Vagina (tissue), 2 donors: ENCODE measurements at regions of chr4 and their contacts with region 1.

Region 1: DNA sequence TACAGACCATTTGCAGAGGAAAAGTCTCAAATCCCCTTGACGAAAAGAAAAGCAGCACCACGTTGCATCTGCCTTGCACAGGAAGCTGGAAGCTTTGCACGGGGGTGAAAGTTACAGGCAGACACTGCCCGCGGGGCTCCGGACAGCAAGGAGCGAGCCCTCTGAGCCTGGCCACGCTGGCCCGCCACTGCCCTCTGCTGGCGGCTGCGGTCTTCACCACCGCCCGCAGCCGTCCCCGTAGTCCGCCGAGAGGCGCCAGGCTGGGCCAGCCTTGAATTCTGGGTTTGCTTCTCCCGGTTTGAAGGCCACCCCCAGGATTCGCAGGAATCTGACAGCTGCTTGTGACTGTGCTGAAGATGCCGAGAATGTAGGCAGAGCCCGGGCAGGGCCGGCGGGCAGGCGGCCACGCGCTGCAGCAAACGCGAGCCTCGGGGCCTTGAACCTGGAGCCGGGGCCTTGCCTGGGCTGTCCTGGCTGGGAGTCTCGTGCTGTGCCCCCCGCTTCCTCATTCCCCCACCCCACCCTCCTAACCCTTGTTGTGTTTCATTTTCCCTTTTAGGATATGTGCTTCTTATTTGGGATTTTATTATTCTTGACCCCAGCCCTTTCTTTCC is 49.2 kb downstream of the ENPP6 start:
- DNase-seq: peak in 1 of 2 donors; percentile 80
- H3K4me3 ChIP-seq: no peak overlapping the region
- H3K27ac ChIP-seq: no peak overlapping the region
- H3K4me1 ChIP-seq: peaks cover 5% of the 10 kb centered on the region
- H3K27me3 ChIP-seq: no peaks in the 10 kb centered on the region
- CTCF ChIP-seq: peak; percentile 81 to 97 (median 86)
- POLR2A ChIP-seq: no peak

Region 2: DNA sequence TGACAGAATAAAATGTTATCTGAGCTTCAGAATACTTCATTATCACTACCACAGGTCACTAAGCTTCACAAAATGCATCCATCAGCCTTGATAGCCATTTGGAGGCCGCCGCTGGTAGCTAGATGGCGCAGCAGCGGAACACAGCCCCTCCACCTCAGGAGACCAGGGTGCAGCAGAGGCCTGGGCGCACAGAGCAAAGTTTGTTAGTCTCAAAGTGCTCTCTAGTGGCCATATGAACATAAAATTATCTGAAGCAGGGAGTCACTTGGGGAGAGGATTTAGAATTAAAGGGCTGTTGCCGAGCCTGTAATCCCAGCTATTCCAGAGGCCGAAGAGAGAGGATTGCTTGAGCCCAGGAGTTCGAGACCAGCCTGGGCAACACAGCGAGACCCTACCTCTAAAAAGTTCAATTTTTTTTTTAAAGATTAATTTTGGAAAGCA is 1243.2 kb before region 1 on chr4:
- intact Hi-C with region 1: no loop called
- DNase-seq: no peak
- H3K4me3 ChIP-seq: no peak overlapping the region
- H3K27ac ChIP-seq: no peak overlapping the region
- H3K4me1 ChIP-seq: no peaks in the 10 kb centered on the region
- H3K27me3 ChIP-seq: no peaks in the 10 kb centered on the region
- CTCF ChIP-seq: peak in 2 of 3 experiments; percentile 49 to 62
- POLR2A ChIP-seq: no peak

Region 3: GRCh38 chr4:183840311-183840710 is 328.2 kb before region 1 on chr4:
- intact Hi-C with region 1: loop called (anchors 5 kb)
- DNase-seq: no peak
- H3K4me3 ChIP-seq: no peak overlapping the region
- H3K27ac ChIP-seq: no peak overlapping the region
- H3K4me1 ChIP-seq: no peaks in the 10 kb centered on the region
- H3K27me3 ChIP-seq: no peaks in the 10 kb centered on the region
- CTCF ChIP-seq: peak; percentile 77 to 85 (median 79)
- POLR2A ChIP-seq: no peak